GM12878 (cell line): ENCODE measurements at regions of chr6 and their contacts with region 1.

Region 1: DNA sequence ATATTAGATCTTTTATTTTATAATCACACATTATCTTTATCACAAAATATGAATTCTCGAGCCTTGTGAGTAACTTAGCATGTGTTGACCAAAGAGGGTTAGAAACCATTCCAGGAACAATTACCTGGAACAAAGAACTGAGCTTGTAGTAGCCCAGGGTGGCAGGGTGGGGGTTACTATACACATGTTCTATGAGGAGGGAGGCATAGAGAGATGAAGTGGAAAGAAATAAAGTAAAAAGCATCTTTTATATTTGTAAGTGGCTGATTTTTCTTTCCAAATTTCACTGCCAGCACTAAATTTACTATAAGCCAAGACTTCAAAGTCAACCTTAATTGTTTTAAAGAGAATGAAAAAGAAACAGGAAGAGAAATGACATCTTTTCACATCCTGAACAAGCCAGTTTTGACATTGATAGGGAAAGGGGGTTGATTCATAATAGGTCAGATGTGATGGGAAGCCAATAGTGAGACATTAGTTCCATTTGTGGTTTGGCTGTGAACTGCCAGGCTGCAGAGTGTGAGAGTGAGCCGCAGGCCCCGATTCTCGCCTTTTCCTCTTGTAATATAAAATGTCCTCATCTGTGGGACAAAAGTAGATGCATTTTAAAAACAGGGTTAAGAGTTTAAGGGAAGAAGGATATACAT is 52.7 kb upstream of the MYB start:
- DNase-seq: no peak
- ATAC-seq: peak; percentile 97
- H3K4me3 ChIP-seq: no peak overlapping the region
- H3K27ac ChIP-seq: peak overlapping the region; percentile 45; the same call in 1 of the 2 replicates
- H3K4me1 ChIP-seq: peaks cover 8% of the 10 kb centered on the region
- H3K27me3 ChIP-seq: no peaks in the 10 kb centered on the region
- CTCF ChIP-seq: no peak
- EP300 ChIP-seq: no peak
- POLR2A ChIP-seq: no peak
- RAD21 ChIP-seq: no peak

Region 2: DNA sequence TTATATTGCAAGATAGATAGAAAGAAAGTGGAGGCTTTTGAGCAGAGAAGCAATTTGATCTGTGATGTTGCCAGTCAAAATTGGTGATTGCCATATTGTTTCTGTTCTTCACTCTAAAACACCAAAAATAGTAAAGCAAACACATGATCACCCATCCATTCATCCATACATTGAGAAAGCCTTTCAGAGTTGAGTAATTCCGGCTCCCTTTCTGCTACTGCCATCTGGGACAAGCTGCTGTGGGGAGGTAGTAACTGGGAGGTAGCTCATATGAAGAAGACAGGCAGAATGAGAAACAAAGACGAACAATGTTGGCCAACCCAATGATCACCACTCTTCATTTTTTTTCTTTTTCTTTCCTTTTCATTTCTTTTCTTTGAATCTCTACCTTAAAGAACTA is 22.7 kb before region 1 on chr6:
- CTCF ChIA-PET with region 1: interaction called, 5 read pairs
- POLR2A ChIA-PET with region 1: interaction called, 3 read pairs
- RAD21 ChIA-PET with region 1: interaction called, 4 read pairs
- SMC1A ChIA-PET with region 1: interaction called, 12 read pairs
- in situ Hi-C with region 1: no loop called
- intact Hi-C with region 1: no loop called
- DNase-seq: no peak
- ATAC-seq: no peak
- H3K4me3 ChIP-seq: no peak overlapping the region
- H3K27ac ChIP-seq: no peak overlapping the region
- H3K4me1 ChIP-seq: peaks cover 3% of the 10 kb centered on the region
- H3K27me3 ChIP-seq: no peaks in the 10 kb centered on the region
- CTCF ChIP-seq: no peak
- EP300 ChIP-seq: no peak
- POLR2A ChIP-seq: no peak
- RAD21 ChIP-seq: no peak

Region 3: GRCh38 chr6:135114355-135115145 is 13.8 kb before region 1 on chr6:
- CTCF ChIA-PET with region 1: interaction called, 15 read pairs
- POLR2A ChIA-PET with region 1: interaction called, 10 read pairs
- RAD21 ChIA-PET with region 1: interaction called, 10 read pairs
- SMC1A ChIA-PET with region 1: interaction called, 24 read pairs
- in situ Hi-C with region 1: no loop called
- intact Hi-C with region 1: no loop called
- DNase-seq: peak; percentile 67
- ATAC-seq: peak; percentile 90
- H3K4me3 ChIP-seq: no peak overlapping the region; the same call in 1 of the 2 replicates
- H3K27ac ChIP-seq: peak overlapping the region; percentile 56
- H3K4me1 ChIP-seq: peaks cover 42% of the 10 kb centered on the region
- H3K27me3 ChIP-seq: no peaks in the 10 kb centered on the region
- CTCF ChIP-seq: no peak
- EP300 ChIP-seq: peak; percentile 97 to 98
- POLR2A ChIP-seq: no peak
- RAD21 ChIP-seq: no peak

Region 4: GRCh38 chr6:135251964-135252429 is 123.6 kb after region 1 on chr6:
- CTCF ChIA-PET with region 1: no interaction called
- POLR2A ChIA-PET with region 1: no interaction called
- RAD21 ChIA-PET with region 1: no interaction called
- SMC1A ChIA-PET with region 1: no interaction called
- in situ Hi-C with region 1: no loop called
- intact Hi-C with region 1: no loop called
- DNase-seq: no peak
- ATAC-seq: no peak
- H3K4me3 ChIP-seq: no peak overlapping the region
- H3K27ac ChIP-seq: no peak overlapping the region
- H3K4me1 ChIP-seq: no peaks in the 10 kb centered on the region; the same call in 1 of the 2 replicates
- H3K27me3 ChIP-seq: no peaks in the 10 kb centered on the region
- CTCF ChIP-seq: no peak
- EP300 ChIP-seq: no peak
- POLR2A ChIP-seq: no peak
- RAD21 ChIP-seq: no peak